PC-9 (cell line): ENCODE measurements at regions of chr6 and their contacts with region 1.

Region 1: GRCh38 chr6:12011276-12012076 is 636 bp upstream of the HIVEP1 start:
- DNase-seq: peak; percentile 95 to 97
- H3K4me3 ChIP-seq: peak overlapping the region; percentile 87; the same call in 1 of the 2 replicates
- H3K27ac ChIP-seq: peak overlapping the region; percentile 96; the same call in 1 of the 2 replicates
- H3K4me1 ChIP-seq: peaks cover 41% of the 10 kb centered on the region
- H3K27me3 ChIP-seq: no peaks in the 10 kb centered on the region
- CTCF ChIP-seq: no peak

Region 2: DNA sequence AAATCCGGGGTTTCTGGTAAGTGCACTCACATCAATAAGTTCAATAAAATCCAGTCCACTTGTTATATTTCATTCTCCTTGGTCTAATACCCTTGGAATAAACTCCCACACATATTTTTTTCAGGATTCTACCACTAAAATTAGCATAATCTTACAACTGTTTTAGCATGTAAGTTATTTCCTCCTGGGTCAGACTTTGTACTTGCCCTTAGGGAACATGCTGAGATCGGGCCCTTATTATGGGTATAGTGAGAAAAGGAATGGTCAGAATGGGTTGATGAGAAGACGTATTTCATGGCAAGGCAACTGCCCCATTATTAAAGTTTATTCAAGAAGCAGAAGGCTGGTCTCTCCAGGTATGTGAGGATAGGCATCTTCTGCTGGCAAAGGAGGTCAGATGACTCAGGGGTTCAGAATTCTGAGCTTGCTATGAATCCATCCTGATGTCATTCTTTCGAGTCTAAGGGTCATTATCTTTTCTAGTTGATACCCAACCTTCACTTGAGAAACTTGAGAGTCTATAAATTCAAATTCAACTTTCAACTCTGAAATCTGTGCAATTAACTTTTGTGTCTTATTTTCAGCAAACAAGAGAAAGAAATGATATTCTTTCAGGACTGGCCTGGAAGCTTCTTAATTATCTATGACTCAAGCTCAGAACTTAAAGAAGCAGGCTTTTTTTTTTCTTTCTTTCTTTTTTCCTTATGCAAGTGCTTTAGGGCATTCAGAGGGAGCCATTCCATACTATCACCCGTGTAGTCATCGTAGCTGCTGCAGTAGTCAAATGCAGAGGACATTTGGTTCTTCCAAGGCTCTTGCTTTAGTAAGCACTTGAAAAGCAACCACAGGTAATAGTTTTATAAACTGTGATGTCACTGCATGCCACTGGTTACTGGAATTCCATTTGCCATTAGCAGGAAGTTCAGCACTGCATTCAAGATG is 326.1 kb before region 1 on chr6:
- CTCF ChIA-PET with region 1: no interaction called
- POLR2A ChIA-PET with region 1: no interaction called
- intact Hi-C with region 1: loop called (anchors 1 kb)
- DNase-seq: peak; percentile 63 to 98
- H3K4me3 ChIP-seq: peak overlapping the region; percentile 34; the same call in 1 of the 2 replicates
- H3K27ac ChIP-seq: peak overlapping the region; percentile 87
- H3K4me1 ChIP-seq: peaks cover 30% of the 10 kb centered on the region
- H3K27me3 ChIP-seq: no peaks in the 10 kb centered on the region
- CTCF ChIP-seq: no peak

Region 3: GRCh38 chr6:11848852-11849731 is 162.4 kb before region 1 on chr6:
- CTCF ChIA-PET with region 1: no interaction called
- POLR2A ChIA-PET with region 1: interaction called, 3 read pairs
- intact Hi-C with region 1: loop called (anchors 2 kb)
- DNase-seq: no peak
- H3K4me3 ChIP-seq: no peak overlapping the region
- H3K27ac ChIP-seq: no peak overlapping the region
- H3K4me1 ChIP-seq: peaks cover 34% of the 10 kb centered on the region
- H3K27me3 ChIP-seq: no peaks in the 10 kb centered on the region
- CTCF ChIP-seq: no peak

Region 4: GRCh38 chr6:12137480-12137879 is 126.0 kb after region 1 on chr6:
- CTCF ChIA-PET with region 1: no interaction called
- POLR2A ChIA-PET with region 1: interaction called, 11 read pairs
- intact Hi-C with region 1: no loop called
- DNase-seq: peak; percentile 44 to 58
- H3K4me3 ChIP-seq: no peak overlapping the region
- H3K27ac ChIP-seq: peak overlapping the region; percentile 60
- H3K4me1 ChIP-seq: peaks cover 18% of the 10 kb centered on the region
- H3K27me3 ChIP-seq: no peaks in the 10 kb centered on the region
- CTCF ChIP-seq: no peak

Region 5: DNA sequence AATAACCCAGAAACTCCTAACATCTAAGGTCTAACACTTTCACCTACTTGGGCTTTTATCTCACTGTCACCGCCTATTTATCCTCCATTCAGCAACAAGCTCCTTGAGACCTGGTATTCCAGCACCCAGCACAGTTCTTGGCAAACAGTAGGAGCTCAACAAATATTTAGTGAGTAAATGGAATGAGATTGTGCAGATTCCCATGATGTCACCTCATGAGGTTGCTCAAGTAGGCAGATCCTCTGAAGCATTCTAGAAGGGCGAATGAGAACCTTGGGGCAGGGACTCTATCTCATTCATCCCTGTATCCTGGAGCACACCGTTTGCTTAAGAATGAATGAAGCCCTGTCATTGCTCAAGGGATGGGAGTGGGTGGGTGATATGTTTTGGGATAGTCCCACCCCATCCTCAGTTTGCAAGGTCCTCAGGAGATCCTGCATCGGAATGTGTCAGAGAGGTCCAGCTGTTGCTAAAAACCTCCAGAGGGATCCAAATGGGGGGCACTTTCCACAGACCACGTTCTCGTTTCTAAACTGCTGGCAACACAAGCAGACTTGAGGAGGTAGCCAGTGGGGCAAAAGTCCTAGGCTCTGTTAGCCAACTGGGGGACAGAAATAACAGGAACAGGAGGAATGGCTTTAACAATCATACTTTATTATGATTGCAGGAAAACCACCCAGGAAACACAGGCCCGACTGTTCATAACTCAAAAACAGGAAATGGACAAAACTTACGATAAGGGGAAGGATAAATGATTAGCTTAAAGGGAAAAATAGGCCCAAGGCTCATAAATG is 320.7 kb after region 1 on chr6:
- CTCF ChIA-PET with region 1: no interaction called
- POLR2A ChIA-PET with region 1: interaction called, 14 read pairs
- intact Hi-C with region 1: no loop called
- DNase-seq: peak in 1 of 2 experiments; percentile 94
- H3K4me3 ChIP-seq: no peak overlapping the region
- H3K27ac ChIP-seq: peak overlapping the region; percentile 34
- H3K4me1 ChIP-seq: peaks cover 56% of the 10 kb centered on the region
- H3K27me3 ChIP-seq: no peaks in the 10 kb centered on the region
- CTCF ChIP-seq: no peak